ENCODE measurements at regions of chr2 and their contacts with region 1.

Region 1: GRCh38 chr2:191869178-191869577 is 22.3 kb upstream of the CAVIN2 start:
- DNase-seq: peak; percentile 7
- ATAC-seq: peak; percentile 93
- H3K4me3 ChIP-seq: no peak overlapping the region
- H3K27ac ChIP-seq: no peak overlapping the region
- H3K4me1 ChIP-seq: no peaks in the 10 kb centered on the region
- H3K27me3 ChIP-seq: peaks cover 0 to 6% of the 10 kb centered on the region in 2 experiments; a peak in 2 of 4 replicates
- CTCF ChIP-seq: peak; percentile 35 to 63 (median 54)
- EP300 ChIP-seq: no peak
- POLR2A ChIP-seq: no peak
- RAD21 ChIP-seq: peak; percentile 61

Region 2: DNA sequence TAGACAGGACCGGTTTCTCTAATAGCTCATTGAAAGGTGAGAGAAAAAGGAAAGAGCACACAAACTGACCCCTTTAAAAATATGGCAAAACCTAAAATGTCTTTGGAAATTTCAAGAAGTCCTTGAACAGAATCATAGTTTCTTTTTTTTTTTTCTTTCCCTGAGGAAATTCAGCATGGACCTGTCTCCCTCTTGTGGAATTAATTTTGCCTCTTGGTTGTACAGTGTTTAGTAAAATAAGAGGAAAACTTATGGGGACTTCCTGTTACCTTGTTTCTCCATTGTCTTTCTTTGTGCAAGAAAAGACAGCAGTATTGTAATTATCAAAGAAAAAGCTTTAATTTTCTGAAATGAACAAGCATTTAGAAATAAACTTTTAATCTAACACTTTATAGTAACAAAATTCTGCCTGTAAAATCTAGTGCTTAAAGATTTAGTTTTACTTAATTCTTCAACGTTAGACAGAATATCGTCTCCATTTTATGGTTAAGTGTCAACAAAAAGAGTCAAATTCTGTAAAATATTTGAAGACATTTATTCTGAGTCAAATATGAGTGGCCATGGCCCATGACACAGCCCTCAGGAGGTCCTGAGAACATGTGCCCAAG is 367.5 kb before region 1 on chr2:
- CTCF ChIA-PET with region 1: no interaction called
- POLR2A ChIA-PET with region 1: no interaction called
- RAD21 ChIA-PET with region 1: no interaction called
- SMC1A ChIA-PET with region 1: no interaction called
- in situ Hi-C with region 1: no loop called
- intact Hi-C with region 1: no loop called
- DNase-seq: no peak
- ATAC-seq: no peak
- H3K4me3 ChIP-seq: no peak overlapping the region
- H3K27ac ChIP-seq: no peak overlapping the region
- H3K4me1 ChIP-seq: no peaks in the 10 kb centered on the region
- H3K27me3 ChIP-seq: no peaks in the 10 kb centered on the region; a peak in 2 of 4 replicates
- CTCF ChIP-seq: peak in 1 of 3 experiments; percentile 15; a peak in 1 of 6 replicates
- EP300 ChIP-seq: no peak
- POLR2A ChIP-seq: no peak
- RAD21 ChIP-seq: peak; percentile 45

Region 3: GRCh38 chr2:191555092-191555742 is 314.0 kb before region 1 on chr2:
- CTCF ChIA-PET with region 1: interaction called, 25 read pairs
- POLR2A ChIA-PET with region 1: no interaction called
- RAD21 ChIA-PET with region 1: interaction called, 9 read pairs
- SMC1A ChIA-PET with region 1: interaction called, 4 read pairs
- in situ Hi-C with region 1: no loop called
- intact Hi-C with region 1: loop called (anchors 5 kb)
- DNase-seq: no peak
- ATAC-seq: peak; percentile 97
- H3K4me3 ChIP-seq: no peak overlapping the region
- H3K27ac ChIP-seq: no peak overlapping the region
- H3K4me1 ChIP-seq: no peaks in the 10 kb centered on the region
- H3K27me3 ChIP-seq: no peaks in the 10 kb centered on the region; a peak in 1 of 4 replicates
- CTCF ChIP-seq: peak; percentile 52 to 81 (median 72); a peak in 5 of 6 replicates
- EP300 ChIP-seq: no peak
- POLR2A ChIP-seq: no peak
- RAD21 ChIP-seq: peak; percentile 96

Region 4: GRCh38 chr2:191818725-191819350 is 50.3 kb before region 1 on chr2:
- CTCF ChIA-PET with region 1: interaction called, 4 read pairs
- POLR2A ChIA-PET with region 1: no interaction called
- RAD21 ChIA-PET with region 1: interaction called, 11 read pairs
- SMC1A ChIA-PET with region 1: no interaction called
- in situ Hi-C with region 1: no loop called
- intact Hi-C with region 1: loop called (anchors 5 kb)
- DNase-seq: no peak
- ATAC-seq: no peak
- H3K4me3 ChIP-seq: no peak overlapping the region
- H3K27ac ChIP-seq: no peak overlapping the region
- H3K4me1 ChIP-seq: no peaks in the 10 kb centered on the region
- H3K27me3 ChIP-seq: peaks cover 7% of the 10 kb centered on the region in 2 experiments; a peak in 3 of 4 replicates
- CTCF ChIP-seq: no peak
- EP300 ChIP-seq: no peak
- POLR2A ChIP-seq: no peak
- RAD21 ChIP-seq: no peak

Region 5: GRCh38 chr2:191933307-191934105 is 64.3 kb after region 1 on chr2:
- CTCF ChIA-PET with region 1: interaction called, 9 read pairs
- POLR2A ChIA-PET with region 1: no interaction called
- RAD21 ChIA-PET with region 1: no interaction called
- SMC1A ChIA-PET with region 1: interaction called, 15 read pairs
- in situ Hi-C with region 1: no loop called
- intact Hi-C with region 1: no loop called
- DNase-seq: peak; percentile 40
- ATAC-seq: peak; percentile 88
- H3K4me3 ChIP-seq: no peak overlapping the region
- H3K27ac ChIP-seq: no peak overlapping the region; the same call in 1 of the 2 replicates
- H3K4me1 ChIP-seq: peaks cover 16% of the 10 kb centered on the region
- H3K27me3 ChIP-seq: no peaks in the 10 kb centered on the region
- CTCF ChIP-seq: no peak
- EP300 ChIP-seq: no peak
- POLR2A ChIP-seq: no peak
- RAD21 ChIP-seq: no peak

Region 6: GRCh38 chr2:192010073-192010472 is 140.9 kb after region 1 on chr2:
- CTCF ChIA-PET with region 1: interaction called, 15 read pairs
- POLR2A ChIA-PET with region 1: no interaction called
- RAD21 ChIA-PET with region 1: interaction called, 3 read pairs
- SMC1A ChIA-PET with region 1: interaction called, 9 read pairs
- in situ Hi-C with region 1: no loop called
- intact Hi-C with region 1: no loop called
- DNase-seq: no peak
- ATAC-seq: no peak
- H3K4me3 ChIP-seq: no peak overlapping the region
- H3K27ac ChIP-seq: no peak overlapping the region
- H3K4me1 ChIP-seq: peaks cover 7% of the 10 kb centered on the region
- H3K27me3 ChIP-seq: no peaks in the 10 kb centered on the region
- CTCF ChIP-seq: no peak
- EP300 ChIP-seq: no peak
- POLR2A ChIP-seq: no peak
- RAD21 ChIP-seq: no peak

Region 7: GRCh38 chr2:192286093-192286701 is 417.0 kb after region 1 on chr2:
- CTCF ChIA-PET with region 1: interaction called, 4 read pairs
- POLR2A ChIA-PET with region 1: no interaction called
- RAD21 ChIA-PET with region 1: no interaction called
- SMC1A ChIA-PET with region 1: no interaction called
- in situ Hi-C with region 1: no loop called
- intact Hi-C with region 1: loop called (anchors 5 kb)
- DNase-seq: no peak
- ATAC-seq: peak; percentile 59
- H3K4me3 ChIP-seq: no peak overlapping the region
- H3K27ac ChIP-seq: no peak overlapping the region
- H3K4me1 ChIP-seq: no peaks in the 10 kb centered on the region
- H3K27me3 ChIP-seq: no peaks in the 10 kb centered on the region
- CTCF ChIP-seq: peak; percentile 32 to 38 (median 36); a peak in 4 of 6 replicates
- EP300 ChIP-seq: no peak
- POLR2A ChIP-seq: no peak
- RAD21 ChIP-seq: peak; percentile 43

Measured in GM12878 (cell line).